ENCODE measurements at regions of chr20 and their contacts with region 1.

Region 1: DNA sequence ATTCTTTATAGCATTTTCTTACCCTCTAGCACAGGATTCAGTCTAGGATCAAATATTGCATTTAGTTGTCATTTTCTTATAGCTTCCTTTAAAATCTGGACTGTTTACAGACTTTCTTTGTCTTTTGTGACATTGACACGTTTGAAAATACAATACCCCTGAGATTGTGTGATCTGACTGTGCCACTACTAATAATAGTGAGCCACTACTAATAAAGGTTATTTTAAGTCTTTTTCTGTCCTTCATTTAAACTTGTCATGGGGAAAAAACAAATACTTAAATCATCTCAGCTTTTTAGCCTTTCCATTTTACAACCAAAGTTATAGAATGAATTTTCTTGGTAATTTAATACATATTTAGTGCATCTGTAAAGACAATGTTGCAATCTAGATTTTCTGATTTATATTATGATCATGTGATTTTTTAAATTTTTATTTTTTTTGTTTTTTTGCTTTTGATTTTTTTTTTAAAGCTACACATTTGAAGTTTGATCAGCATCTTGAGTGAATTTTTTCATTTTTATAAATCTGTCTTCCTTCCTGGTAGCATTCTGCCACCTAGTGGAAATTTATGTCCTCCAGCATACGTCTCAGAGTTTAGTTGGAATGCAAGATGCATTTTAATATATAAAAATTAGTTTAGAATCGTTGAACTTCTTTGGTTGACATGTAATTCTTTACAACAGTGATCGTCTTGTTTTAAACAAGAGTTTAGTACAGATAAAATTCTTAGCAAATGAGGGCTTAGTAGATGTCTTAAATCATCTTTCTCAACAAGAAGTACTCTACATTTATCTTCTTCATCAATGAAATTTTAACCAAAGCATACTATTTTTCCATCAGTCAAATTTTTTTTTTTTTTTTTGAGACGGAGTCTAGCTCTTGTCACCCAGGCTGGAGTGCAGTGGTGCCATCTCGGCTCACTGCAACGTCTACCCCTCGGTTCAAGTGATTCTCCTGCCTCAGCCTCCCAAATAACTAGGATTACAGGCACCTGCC is 119.4 kb downstream of the NCOA3 start:
- DNase-seq: peak; percentile 54
- H3K4me3 Mint-ChIP-seq: no peak overlapping the region
- H3K27ac Mint-ChIP-seq: no peak overlapping the region
- H3K4me1 Mint-ChIP-seq: peaks cover 39% of the 10 kb centered on the region
- H3K27me3 Mint-ChIP-seq: no peaks in the 10 kb centered on the region

Region 2: GRCh38 chr20:47598928-47599745 is 22.0 kb before region 1 on chr20:
- CTCF ChIA-PET with region 1: no interaction called
- POLR2A ChIA-PET with region 1: no interaction called
- DNase-seq: no peak
- H3K4me3 Mint-ChIP-seq: no peak overlapping the region
- H3K27ac Mint-ChIP-seq: no peak overlapping the region
- H3K4me1 Mint-ChIP-seq: peaks cover 44% of the 10 kb centered on the region
- H3K27me3 Mint-ChIP-seq: no peaks in the 10 kb centered on the region

Region 3: GRCh38 chr20:47610247-47610944 is 10.7 kb before region 1 on chr20:
- CTCF ChIA-PET with region 1: interaction called, 14 read pairs
- POLR2A ChIA-PET with region 1: no interaction called
- DNase-seq: peak; percentile 73
- H3K4me3 Mint-ChIP-seq: peak overlapping the region; percentile 55
- H3K27ac Mint-ChIP-seq: peak overlapping the region; percentile 86
- H3K4me1 Mint-ChIP-seq: peaks cover 76% of the 10 kb centered on the region
- H3K27me3 Mint-ChIP-seq: no peaks in the 10 kb centered on the region